ENCODE measurements at regions of chr9 and their contacts with region 1.

Region 1: DNA sequence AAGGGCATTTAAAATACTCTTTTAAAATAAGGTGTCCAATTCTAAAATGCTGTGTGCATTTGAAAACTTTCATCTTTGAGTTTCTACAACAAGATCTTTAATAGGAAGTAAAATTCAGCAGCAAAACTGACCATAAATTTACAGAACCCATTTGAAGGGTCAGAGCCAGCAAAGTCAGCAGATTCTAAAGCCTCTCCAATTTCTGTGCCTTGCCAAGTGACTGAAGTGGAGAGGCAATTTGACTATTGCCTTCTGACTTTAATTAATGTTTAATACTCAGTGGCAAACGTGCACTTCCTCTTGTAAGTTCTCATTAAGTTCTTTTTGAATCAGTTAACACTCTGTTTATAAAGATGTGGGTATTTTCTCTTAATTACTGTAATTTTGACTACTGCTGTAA is 155.2 kb downstream of the BAAT start:
- DNase-seq: no peak
- ATAC-seq: no peak
- H3K4me3 ChIP-seq: no peak overlapping the region
- H3K27ac ChIP-seq: no peak overlapping the region
- H3K4me1 ChIP-seq: no peaks in the 10 kb centered on the region
- H3K27me3 ChIP-seq: no peaks in the 10 kb centered on the region

Region 2: DNA sequence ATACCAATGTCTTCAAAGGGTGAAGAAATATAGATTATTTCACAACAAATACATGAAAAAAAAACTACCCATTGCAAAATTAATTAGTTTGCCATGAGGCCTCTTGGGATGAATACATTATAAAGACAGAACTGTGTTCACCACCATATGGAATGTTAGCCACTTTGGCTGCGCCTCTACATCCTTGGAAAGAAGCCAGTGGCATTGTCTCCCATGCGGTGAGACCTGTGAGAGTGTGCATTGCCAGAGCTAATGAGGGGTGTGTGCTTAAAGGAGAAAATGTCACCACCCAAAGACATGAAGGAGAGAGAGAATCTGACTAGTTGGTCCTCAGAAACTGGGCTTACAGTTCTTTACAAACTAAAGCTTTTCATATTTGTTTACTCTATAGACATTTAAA is 90.5 kb before region 1 on chr9:
- intact Hi-C with region 1: loop called in 1 of 4 experiments (anchors 10 kb)
- DNase-seq: no peak
- ATAC-seq: no peak
- H3K4me3 ChIP-seq: no peak overlapping the region
- H3K27ac ChIP-seq: no peak overlapping the region
- H3K4me1 ChIP-seq: no peaks in the 10 kb centered on the region
- H3K27me3 ChIP-seq: no peaks in the 10 kb centered on the region

Measured in right cardiac atrium (tissue), 5 donors.